CD4-positive, alpha-beta T cell (primary cell): ENCODE measurements at regions of chr12 and their contacts with region 1.

Region 1: DNA sequence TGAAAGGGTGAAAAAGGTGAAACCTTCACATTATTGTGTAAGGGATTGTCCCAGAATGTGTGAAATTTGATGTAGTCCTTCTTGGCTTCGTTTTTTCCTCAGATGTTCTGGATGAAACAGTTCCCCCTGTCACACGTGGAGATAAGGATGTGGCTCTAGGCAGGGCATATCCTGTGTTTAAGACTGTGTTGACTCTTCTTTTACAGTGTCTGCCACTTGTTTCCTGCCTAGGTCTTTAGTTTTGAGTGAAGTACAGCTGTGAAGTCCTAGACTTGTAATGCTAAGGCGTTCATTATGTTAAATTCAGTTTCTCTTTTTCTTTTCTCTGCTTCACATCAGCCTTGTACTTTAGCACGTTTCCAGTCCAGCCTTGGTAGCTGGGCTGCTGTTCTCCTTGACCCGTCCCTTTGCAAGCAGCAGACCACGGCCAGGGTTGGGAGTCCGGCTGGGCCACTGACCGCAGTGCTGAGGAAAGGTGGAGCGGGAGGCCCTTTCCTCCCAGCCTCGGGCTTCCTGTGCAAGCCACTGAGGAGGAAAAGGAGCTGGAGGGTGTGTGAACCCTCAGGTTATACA is 59.1 kb downstream of the RASSF3 start:
- DNase-seq: peak in 13 of 14 experiments; percentile 23 to 93 (median 48)
- ATAC-seq: peak; percentile 81
- H3K4me3 ChIP-seq: peak overlapping the region; percentile 59
- H3K4me3 Mint-ChIP-seq: peak overlapping the region; percentile 91
- H3K27ac ChIP-seq: peak overlapping the region; percentile 82 to 91
- H3K27ac Mint-ChIP-seq: peak overlapping the region; percentile 98
- H3K4me1 ChIP-seq: peaks cover 87% of the 10 kb centered on the region
- H3K4me1 Mint-ChIP-seq: peaks cover 94% of the 10 kb centered on the region
- H3K27me3 ChIP-seq: no peaks in the 10 kb centered on the region
- H3K27me3 Mint-ChIP-seq: no peaks in the 10 kb centered on the region
- CTCF ChIP-seq: no peak

Region 2: DNA sequence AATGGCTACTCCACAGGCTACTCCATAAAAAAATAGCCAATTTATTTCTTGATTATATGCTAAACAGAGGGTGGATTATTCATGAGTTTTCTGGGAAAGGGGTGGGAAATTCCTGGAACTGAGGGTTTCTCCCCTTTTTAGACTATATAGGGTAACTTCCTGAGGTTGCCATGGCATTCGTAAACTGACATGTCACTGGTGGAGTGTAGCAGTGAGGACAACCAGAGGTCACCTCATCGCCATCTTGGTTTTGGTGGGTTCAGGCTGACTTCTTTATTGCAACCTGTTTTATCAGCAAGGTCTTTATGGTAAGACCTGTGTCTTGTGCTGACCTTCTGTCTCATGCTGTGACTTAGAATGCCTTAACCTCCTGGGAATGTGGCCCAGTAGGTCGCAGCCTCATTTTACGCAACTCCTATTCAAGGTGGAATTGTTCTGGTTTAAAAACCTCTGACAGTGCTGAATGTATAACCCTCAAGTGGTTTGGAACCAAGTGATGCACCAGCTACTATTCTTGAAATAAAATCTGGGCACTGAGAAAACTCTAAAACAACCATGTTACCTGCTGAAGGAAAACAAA is 306.5 kb before region 1 on chr12:
- CTCF ChIA-PET with region 1: no interaction called
- POLR2A ChIA-PET with region 1: no interaction called
- intact Hi-C with region 1: no loop called
- DNase-seq: no peak
- ATAC-seq: no peak
- H3K4me3 ChIP-seq: no peak overlapping the region
- H3K4me3 Mint-ChIP-seq: no peak overlapping the region
- H3K27ac ChIP-seq: no peak overlapping the region
- H3K27ac Mint-ChIP-seq: no peak overlapping the region
- H3K4me1 ChIP-seq: no peaks in the 10 kb centered on the region
- H3K4me1 Mint-ChIP-seq: no peaks in the 10 kb centered on the region
- H3K27me3 ChIP-seq: no peaks in the 10 kb centered on the region
- H3K27me3 Mint-ChIP-seq: no peaks in the 10 kb centered on the region
- CTCF ChIP-seq: no peak

Region 3: DNA sequence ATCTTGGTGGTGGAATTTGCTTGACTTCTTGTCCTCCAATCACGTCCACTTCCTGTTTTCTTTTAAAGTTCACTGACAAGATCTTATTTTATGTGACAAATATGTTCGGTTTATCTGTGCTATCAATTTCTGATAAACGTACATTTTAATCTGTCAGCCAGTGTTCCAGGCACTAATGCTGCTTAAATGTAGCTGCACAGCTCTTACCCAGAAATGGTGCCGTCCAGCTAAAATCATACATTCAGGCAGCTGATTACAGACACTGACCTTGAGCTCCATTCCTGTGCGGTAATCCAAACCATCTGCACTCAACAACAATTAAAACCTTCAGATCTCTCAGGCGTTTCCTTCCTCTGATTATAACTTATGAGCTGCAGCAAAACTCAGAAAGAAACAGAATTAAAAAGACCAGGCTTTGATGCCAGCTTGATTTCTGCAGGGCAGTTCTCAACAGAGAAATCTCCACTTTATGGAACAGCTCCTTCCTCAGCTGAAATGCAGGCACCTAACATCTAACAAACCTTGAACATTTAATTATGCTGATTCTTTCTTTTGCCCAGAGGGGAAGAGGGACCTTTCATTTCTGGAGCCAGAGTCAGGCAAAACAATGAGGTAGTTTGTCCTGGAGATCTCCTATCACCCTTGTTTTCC is 85.5 kb before region 1 on chr12:
- CTCF ChIA-PET with region 1: no interaction called
- POLR2A ChIA-PET with region 1: interaction called, 15 read pairs
- intact Hi-C with region 1: no loop called
- DNase-seq: peak in 3 of 14 experiments; percentile 19 to 34 (median 21)
- ATAC-seq: peak; percentile 26
- H3K4me3 ChIP-seq: peak overlapping the region; percentile 24
- H3K4me3 Mint-ChIP-seq: peak overlapping the region; percentile 80
- H3K27ac ChIP-seq: peak overlapping the region; percentile 7 to 23
- H3K27ac Mint-ChIP-seq: peak overlapping the region; percentile 76
- H3K4me1 ChIP-seq: peaks cover 30% of the 10 kb centered on the region
- H3K4me1 Mint-ChIP-seq: peaks cover 34% of the 10 kb centered on the region
- H3K27me3 ChIP-seq: no peaks in the 10 kb centered on the region
- H3K27me3 Mint-ChIP-seq: no peaks in the 10 kb centered on the region
- CTCF ChIP-seq: no peak

Region 4: DNA sequence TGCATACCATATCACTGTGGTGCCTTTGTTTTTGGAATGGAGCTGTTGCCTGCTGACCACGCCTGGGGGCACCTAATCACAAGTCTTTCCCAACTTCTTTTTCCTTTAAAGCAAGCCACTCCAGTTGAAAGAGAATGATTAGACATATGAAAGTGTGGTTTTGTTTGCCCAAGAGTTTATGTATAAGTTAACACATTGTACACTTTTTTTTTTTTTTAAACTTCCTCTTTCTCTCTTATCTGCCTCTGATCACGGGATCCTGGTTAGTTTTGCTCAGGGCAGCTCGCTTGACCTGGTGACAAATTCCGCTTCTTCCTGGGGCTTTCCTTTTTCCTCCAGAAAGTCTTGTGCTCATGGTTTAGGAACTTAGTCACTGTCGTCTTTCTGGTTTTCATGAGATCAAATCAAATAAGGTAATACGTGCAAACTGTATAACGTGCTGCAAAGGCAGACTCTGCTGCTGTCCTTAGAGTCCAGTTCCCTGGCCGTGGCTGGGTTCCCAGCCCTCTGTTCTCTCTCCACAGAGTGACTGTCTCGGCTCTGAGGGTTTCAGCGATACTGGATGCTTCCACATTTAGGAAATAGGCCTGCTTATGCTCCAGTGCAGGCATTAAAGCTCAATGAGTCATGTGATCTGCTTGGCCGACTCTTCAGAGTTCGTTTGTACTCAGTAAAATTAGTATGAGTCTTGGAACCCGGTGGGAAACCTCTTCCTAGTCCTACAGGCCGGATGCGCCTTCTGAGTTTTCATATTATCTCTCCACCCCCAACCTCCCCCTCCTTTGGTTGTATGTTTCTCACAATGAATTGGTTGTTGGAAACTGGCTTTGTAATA is 43.9 kb before region 1 on chr12:
- CTCF ChIA-PET with region 1: no interaction called
- POLR2A ChIA-PET with region 1: interaction called, 14 read pairs
- intact Hi-C with region 1: no loop called
- DNase-seq: peak in 4 of 14 experiments; percentile 38 to 80 (median 58)
- ATAC-seq: peak; percentile 68
- H3K4me3 ChIP-seq: peak overlapping the region; percentile 38
- H3K4me3 Mint-ChIP-seq: peak overlapping the region; percentile 87
- H3K27ac ChIP-seq: peak overlapping the region; percentile 32 to 71
- H3K27ac Mint-ChIP-seq: peak overlapping the region; percentile 81
- H3K4me1 ChIP-seq: peaks cover 68% of the 10 kb centered on the region
- H3K4me1 Mint-ChIP-seq: peaks cover 78% of the 10 kb centered on the region
- H3K27me3 ChIP-seq: no peaks in the 10 kb centered on the region
- H3K27me3 Mint-ChIP-seq: no peaks in the 10 kb centered on the region
- CTCF ChIP-seq: no peak

Region 5: GRCh38 chr12:64679487-64679983 is 10.2 kb after region 1 on chr12:
- CTCF ChIA-PET with region 1: interaction called, 15 read pairs
- POLR2A ChIA-PET with region 1: interaction called, 808 read pairs
- intact Hi-C with region 1: loop called in 1 of 2 experiments (anchors 1 kb)
- DNase-seq: peak; percentile 53 to 90 (median 68)
- ATAC-seq: peak; percentile 66
- H3K4me3 ChIP-seq: peak overlapping the region; percentile 19
- H3K4me3 Mint-ChIP-seq: peak overlapping the region; percentile 59
- H3K27ac ChIP-seq: peak overlapping the region; percentile 80 to 91
- H3K27ac Mint-ChIP-seq: peak overlapping the region; percentile 98
- H3K4me1 ChIP-seq: peaks cover 99% of the 10 kb centered on the region
- H3K4me1 Mint-ChIP-seq: peaks cover 90% of the 10 kb centered on the region
- H3K27me3 ChIP-seq: no peaks in the 10 kb centered on the region
- H3K27me3 Mint-ChIP-seq: no peaks in the 10 kb centered on the region
- CTCF ChIP-seq: no peak